MCF 10A (cell line): ENCODE measurements at regions of chr14 and their contacts with region 1.

Region 1: GRCh38 chr14:68520637-68521556 is 272.0 kb downstream of the ZFP36L1 start:
- DNase-seq: peak; percentile 83
- H3K4me3 Mint-ChIP-seq: peak overlapping the region; percentile 28
- H3K27ac Mint-ChIP-seq: peak overlapping the region; percentile 98
- H3K4me1 Mint-ChIP-seq: peaks cover 34% of the 10 kb centered on the region
- H3K27me3 Mint-ChIP-seq: no peaks in the 10 kb centered on the region
- CTCF ChIP-seq: no peak

Region 2: GRCh38 chr14:68412505-68413496 is 108.1 kb before region 1 on chr14:
- CTCF ChIA-PET with region 1: no interaction called
- POLR2A ChIA-PET with region 1: no interaction called
- intact Hi-C with region 1: no loop called
- DNase-seq: no peak
- H3K4me3 Mint-ChIP-seq: no peak overlapping the region
- H3K27ac Mint-ChIP-seq: no peak overlapping the region
- H3K4me1 Mint-ChIP-seq: peaks cover 10% of the 10 kb centered on the region
- H3K27me3 Mint-ChIP-seq: no peaks in the 10 kb centered on the region
- CTCF ChIP-seq: no peak

Region 3: DNA sequence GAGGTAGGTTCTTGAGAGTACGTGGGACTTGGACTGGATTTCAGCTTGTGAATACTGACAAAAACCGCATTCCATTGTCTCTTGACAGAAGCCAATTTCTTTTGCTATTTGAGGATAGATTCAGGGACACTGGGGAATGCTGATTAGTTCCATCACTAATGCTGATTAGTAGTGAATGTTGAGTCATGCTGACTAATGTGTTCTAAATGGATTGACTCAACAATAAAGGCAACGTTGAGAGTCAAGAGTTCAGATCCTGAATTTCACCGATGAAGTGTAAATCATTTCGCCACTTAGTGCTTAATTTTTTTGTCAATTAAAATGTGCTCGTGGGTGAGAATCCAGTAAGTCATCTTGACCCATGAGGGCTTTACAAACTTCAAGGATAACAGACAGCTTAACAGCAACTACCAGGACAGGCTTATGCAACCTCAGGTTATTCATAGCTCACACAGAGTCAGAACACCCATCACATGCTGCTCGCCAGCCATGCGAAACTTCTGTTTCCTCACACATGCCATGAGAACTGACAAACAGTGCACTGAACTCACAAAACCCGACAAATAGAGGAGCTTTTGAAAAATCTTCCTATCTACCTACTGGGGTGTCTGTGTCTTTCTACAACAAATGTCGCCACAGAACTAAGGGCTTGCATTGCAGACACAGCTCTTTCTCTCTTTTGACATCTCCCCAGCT is 44.5 kb before region 1 on chr14:
- CTCF ChIA-PET with region 1: interaction called, 3 read pairs
- POLR2A ChIA-PET with region 1: interaction called, 12 read pairs
- intact Hi-C with region 1: no loop called
- DNase-seq: peak; percentile 90
- H3K4me3 Mint-ChIP-seq: peak overlapping the region; percentile 0
- H3K27ac Mint-ChIP-seq: peak overlapping the region; percentile 92
- H3K4me1 Mint-ChIP-seq: peaks cover 42% of the 10 kb centered on the region
- H3K27me3 Mint-ChIP-seq: no peaks in the 10 kb centered on the region
- CTCF ChIP-seq: no peak

Region 4: GRCh38 chr14:68535404-68536017 is 14.6 kb after region 1 on chr14:
- CTCF ChIA-PET with region 1: interaction called, 7 read pairs
- POLR2A ChIA-PET with region 1: interaction called, 31 read pairs
- intact Hi-C with region 1: no loop called
- DNase-seq: peak; percentile 60
- H3K4me3 Mint-ChIP-seq: no peak overlapping the region
- H3K27ac Mint-ChIP-seq: peak overlapping the region; percentile 72
- H3K4me1 Mint-ChIP-seq: peaks cover 26% of the 10 kb centered on the region
- H3K27me3 Mint-ChIP-seq: no peaks in the 10 kb centered on the region
- CTCF ChIP-seq: no peak